ENCODE measurements at regions of chr4 and their contacts with region 1.

Region 1: DNA sequence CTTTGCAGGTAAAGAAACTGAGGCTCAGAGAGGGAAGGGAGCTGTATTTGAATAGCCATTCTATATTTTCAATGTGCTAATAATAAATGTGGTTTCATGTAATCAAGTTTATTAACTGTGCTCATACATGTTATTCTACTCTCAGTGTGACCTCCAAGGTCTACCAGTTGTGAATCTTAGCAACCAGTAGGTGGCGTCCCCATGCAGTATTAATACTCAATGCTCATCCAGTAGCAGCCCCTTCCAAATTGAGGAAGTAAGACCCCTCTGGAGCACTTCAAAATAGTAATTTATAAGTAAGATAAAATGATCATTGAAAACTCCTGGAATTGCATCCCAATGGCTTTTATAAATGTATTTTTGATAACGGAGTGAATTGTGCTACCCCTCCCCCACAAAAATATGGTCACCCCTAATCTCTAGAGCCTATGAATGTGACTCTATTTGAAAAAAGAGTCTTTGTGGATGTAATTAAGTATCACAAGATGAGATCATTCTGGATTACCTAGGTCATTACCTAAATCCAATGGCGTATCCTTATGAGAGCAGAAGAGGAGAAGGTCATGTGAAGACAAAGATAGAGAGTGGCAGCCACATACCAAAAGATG is 20.4 kb upstream of the SEPSECS start:
- DNase-seq: peak; percentile 14
- H3K4me3 Mint-ChIP-seq: no peak overlapping the region
- H3K27ac Mint-ChIP-seq: no peak overlapping the region
- H3K4me1 Mint-ChIP-seq: no peaks in the 10 kb centered on the region
- H3K27me3 Mint-ChIP-seq: no peaks in the 10 kb centered on the region
- CTCF ChIP-seq: peak; percentile 41

Region 2: GRCh38 chr4:25367004-25367621 is 186.5 kb after region 1 on chr4:
- CTCF ChIA-PET with region 1: no interaction called
- intact Hi-C with region 1: loop called (anchors 2 kb)
- DNase-seq: no peak
- H3K4me3 Mint-ChIP-seq: no peak overlapping the region
- H3K27ac Mint-ChIP-seq: no peak overlapping the region
- H3K4me1 Mint-ChIP-seq: peaks cover 6% of the 10 kb centered on the region
- H3K27me3 Mint-ChIP-seq: no peaks in the 10 kb centered on the region
- CTCF ChIP-seq: no peak